ENCODE measurements at regions of chr19 and their contacts with region 1.

Region 1: DNA sequence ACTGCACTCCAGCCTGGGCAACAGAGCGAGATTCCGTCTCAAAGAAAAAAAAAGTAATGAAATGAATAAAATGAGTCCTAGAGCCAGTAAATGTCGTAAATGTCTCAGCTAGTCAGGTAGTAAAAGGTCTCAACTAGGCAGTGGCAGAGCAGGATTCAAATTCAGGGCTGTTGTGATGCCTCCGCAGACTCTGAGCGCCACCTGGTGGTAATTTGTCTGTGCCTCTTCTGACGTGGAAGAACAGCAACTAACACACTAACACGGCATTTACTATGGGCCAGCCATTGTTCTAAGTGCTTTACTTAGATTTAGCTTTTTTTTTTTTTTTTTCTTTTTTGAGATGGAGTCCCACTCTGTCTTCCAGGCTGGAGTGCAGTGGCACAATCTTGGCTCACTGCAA is 30.2 kb downstream of the CYP2F1 start:
- DNase-seq: peak; percentile 85
- ATAC-seq: peak; percentile 56

Region 2: DNA sequence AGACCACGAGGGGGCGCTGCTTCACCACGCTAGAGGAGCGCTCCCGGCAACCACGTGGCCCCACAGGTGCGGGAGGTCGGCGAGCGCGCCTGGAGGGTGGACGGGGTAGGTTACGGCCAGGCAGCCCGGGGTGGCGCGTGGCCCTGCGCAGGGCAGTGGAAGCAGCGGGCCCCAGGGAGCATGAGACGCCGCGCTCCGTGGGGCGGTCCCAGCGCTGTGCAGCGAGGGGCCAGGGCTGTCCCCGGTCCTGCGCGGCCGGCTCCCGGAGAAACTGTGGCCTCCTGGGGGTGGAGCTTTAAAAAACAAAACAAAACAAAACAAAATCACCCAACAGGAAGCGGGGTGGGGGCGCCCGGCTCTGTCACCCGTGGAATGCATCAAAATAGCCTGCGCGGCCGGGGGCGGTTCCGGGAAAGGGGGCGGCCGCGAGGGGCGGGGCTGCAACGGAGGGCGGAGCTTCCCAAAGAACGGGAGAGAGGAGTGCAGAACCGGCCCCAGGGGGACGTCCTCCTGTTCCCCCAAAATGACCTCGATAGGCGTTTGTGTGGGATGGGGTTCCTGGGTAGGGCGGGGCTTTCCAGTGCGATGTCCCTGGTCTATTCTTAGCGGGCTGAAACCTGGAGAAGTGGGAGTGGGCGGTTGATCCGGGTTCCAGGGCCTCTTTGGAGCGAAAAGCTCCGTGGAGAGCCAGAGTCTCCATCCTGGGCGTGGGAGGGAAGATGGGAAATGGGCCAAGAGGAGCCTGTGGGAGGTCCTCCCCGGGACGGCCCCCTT is 481.3 kb before region 1 on chr19:
- intact Hi-C with region 1: loop called (anchors 1 kb)
- DNase-seq: peak; percentile 95
- ATAC-seq: peak; percentile 88

Region 3: DNA sequence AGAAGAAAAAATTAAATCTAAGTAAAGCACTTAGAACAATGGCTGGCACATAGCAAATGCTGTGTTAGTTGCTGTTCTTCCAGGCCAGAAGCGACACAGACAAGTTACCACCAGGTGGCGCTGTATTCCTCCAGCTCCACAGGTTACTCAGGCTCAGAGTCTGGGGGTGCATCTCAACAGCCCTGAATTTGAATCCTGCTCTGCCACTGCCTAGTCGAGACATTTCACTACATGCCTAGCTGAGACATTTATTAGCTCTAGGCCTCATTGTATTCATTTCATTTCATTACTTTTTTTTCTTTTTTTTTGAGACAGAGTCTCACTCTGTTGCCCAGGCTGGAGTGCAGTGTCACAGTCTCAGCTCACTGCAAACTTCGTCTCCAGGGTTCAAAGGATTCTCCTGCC is 169.8 kb before region 1 on chr19:
- intact Hi-C with region 1: loop called (anchors 1 kb)
- DNase-seq: no peak
- ATAC-seq: no peak

Region 4: GRCh38 chr19:41083516-41083915 is 60.9 kb before region 1 on chr19:
- intact Hi-C with region 1: no loop called
- DNase-seq: no peak
- ATAC-seq: no peak

Region 5: DNA sequence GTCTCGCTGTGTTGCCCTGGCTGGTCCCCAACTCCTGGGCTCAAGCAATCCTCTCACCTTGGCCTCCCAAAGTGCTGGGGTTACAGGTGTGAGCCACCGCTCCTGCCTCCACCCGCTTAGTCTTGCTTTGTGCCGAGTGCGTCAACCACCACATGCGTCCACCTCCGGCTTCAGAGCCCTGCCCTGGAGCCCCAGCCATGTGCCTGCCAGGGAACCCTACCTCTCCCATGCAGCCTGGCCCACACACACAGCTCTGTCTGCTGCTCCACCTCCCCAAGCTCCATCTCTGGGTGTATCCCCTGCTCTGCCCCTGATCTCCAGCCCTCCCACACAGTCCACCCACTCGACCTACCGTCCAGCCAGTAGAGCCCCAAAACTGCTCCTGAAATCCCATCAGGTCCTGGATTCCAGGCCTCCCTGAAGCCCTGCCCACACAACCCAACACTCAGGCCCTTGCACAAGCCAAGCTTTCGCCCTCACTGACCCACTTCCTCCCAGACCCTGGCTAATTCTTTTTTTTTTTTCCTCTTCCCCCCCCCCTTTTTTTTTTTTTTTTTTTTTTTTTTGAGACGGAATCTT is 20.6 kb before region 1 on chr19:
- intact Hi-C with region 1: loop called (anchors 1 kb)
- DNase-seq: no peak
- ATAC-seq: no peak

Region 6: GRCh38 chr19:41248895-41249294 is 104.5 kb after region 1 on chr19:
- intact Hi-C with region 1: no loop called
- DNase-seq: no peak
- ATAC-seq: no peak

Measured in Right ventricle myocardium inferior (tissue), 1 donor.